A673 (cell line): ENCODE measurements at regions of chr17 and their contacts with region 1.

Region 1: GRCh38 chr17:63983320-63983719 is 10.6 kb upstream of the SCN4A start:
- DNase-seq: no peak
- H3K4me3 ChIP-seq: no peak overlapping the region
- H3K27ac ChIP-seq: no peak overlapping the region
- H3K4me1 ChIP-seq: no peaks in the 10 kb centered on the region
- H3K27me3 ChIP-seq: no peaks in the 10 kb centered on the region
- CTCF ChIP-seq: no peak

Region 2: DNA sequence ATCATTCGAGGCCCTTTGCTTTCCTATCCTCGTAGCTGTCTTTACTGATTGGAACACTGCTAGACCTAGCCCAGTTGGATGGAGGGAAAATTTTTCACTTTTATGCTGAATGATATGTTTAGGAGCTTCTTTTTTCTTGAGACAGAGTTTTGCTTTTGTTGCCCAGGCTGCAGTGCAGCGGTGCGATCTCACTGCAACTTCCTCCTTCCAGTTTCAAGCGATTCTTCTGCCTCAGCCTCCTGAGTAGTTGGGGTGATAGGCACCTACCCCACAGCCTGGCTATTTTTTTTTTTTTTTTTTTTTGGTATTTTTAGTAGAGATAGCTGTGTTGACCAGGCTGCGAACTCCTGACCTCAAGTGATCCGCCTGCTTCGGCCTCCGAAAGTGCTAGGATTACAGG is 173.3 kb before region 1 on chr17:
- CTCF ChIA-PET with region 1: no interaction called
- POLR2A ChIA-PET with region 1: no interaction called
- intact Hi-C with region 1: no loop called
- DNase-seq: no peak
- H3K4me3 ChIP-seq: no peak overlapping the region
- H3K27ac ChIP-seq: no peak overlapping the region
- H3K4me1 ChIP-seq: no peaks in the 10 kb centered on the region
- H3K27me3 ChIP-seq: no peaks in the 10 kb centered on the region
- CTCF ChIP-seq: no peak

Region 3: DNA sequence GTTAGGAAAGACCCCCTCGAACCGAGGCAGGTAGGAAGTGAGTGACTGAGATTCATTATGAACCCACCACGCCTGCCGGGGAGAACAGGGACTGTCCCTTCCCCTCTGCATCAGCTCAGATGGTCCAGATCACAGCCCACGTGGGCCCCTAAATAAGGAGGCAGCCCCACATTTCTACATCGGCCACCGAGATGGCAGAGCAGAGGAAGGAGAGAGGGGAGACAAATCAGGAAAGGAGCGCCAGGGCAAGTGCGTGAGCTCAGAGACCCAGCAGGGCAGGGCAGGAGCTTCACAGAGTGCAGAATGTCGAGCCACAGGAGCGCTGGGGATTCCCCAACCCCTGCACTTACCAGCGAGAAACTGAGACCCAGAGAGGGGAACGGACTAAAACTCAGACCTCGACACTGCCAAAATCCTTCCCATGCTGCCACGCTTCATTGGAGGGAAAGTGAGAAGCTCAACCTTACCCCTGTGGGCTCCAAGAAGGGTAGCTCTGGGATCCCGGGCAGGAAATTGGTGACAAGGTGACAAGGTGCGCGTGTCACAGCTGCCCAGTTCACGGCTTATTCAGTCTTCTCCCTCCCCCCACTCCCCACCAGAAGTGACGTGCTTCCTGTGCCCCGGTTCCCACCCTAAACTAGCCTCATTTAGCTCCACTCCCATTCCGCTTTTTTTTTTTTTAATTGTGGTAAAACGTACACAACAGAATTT is 36.9 kb after region 1 on chr17 and contains the start of gene ICAM2:
- CTCF ChIA-PET with region 1: no interaction called
- POLR2A ChIA-PET with region 1: interaction called, 18 read pairs
- intact Hi-C with region 1: no loop called
- DNase-seq: no peak
- H3K4me3 ChIP-seq: no peak within 1 kb of the TSS
- H3K27ac ChIP-seq: no peak within 1 kb of the TSS
- H3K4me1 ChIP-seq: no peaks in the 10 kb centered on the region
- H3K27me3 ChIP-seq: no peaks in the 10 kb centered on the region
- CTCF ChIP-seq: no peak
- total RNA-seq, gene ICAM2: 0.99 and 1.2 TPM in 2 replicates

Region 4: DNA sequence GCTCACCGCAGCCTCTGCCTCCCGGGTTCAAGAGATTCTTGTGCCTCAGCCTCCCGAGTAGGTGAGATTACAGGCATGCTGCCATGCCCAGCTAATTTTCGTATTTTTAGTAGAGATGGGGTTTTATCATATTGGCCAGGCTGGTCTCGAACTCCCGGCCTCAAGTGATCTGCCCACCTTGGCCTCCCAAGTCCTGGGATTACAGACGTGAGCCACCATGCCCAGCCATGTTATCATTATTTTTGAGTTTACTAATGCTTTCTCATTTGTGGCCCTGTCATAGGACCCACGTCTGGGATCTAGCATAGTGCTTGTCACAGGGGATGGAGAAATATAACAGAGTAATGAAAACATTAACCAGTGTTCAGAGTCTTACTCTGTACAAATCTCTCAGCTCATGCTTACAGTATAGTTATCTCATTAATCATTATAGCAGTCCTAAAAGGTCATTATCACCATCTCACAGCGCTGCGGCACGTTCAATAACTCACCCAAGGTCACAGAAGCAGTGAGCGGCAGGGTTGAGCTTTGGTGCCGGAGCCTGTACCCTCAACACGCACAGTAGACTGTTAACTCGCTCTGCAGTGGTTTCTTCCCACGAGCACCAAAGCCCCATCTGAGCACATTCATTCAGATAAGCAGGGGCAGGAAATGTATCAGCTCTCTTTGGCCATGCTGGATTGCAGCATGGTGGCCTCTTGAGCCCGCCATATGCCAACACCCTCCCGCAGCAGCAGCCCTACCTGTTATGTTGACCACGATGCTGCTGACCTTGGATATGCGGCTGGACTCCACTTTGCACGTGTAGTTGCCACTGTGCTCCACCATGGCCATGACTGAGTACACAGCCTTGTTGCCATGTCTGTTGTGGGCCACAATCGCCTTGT is 385.9 kb after region 1 on chr17:
- CTCF ChIA-PET with region 1: no interaction called
- POLR2A ChIA-PET with region 1: no interaction called
- intact Hi-C with region 1: no loop called
- DNase-seq: no peak
- H3K4me3 ChIP-seq: no peak overlapping the region
- H3K27ac ChIP-seq: no peak overlapping the region
- H3K4me1 ChIP-seq: no peaks in the 10 kb centered on the region
- H3K27me3 ChIP-seq: no peaks in the 10 kb centered on the region
- CTCF ChIP-seq: no peak

Region 5: DNA sequence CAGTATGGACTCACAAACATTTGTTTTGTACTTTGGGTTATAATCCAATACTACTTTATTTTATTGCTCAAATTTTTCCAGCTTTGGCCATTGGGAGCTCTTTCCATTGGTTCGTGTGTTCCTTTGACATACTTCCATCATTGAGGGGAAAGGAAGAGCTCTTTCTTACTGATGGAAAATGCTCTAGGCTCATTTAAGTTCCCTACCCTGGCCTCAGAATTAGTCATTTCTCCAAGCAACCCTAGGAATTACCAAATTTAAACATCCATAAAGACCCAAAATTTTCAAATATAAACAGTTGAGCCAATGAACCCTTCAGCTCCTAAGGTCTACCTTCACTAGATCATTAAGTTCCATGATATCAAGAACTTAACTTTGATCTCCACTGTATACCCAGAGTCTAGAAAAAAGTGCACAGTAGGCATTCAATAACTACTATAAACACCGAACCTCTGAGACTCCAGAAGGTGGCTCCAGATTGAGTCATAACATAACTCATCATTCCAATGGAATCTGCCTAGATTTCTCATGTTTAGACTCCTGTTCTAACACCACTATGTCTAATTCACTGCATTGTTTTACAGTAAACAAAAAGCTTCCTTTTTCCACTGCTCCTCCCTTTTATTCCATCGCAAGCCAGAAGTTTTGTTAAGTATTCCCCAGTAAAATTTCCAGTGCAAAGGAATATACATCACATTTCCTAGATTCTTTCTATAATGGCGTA is 639.8 kb after region 1 on chr17:
- CTCF ChIA-PET with region 1: no interaction called
- POLR2A ChIA-PET with region 1: no interaction called
- intact Hi-C with region 1: no loop called
- DNase-seq: no peak
- H3K4me3 ChIP-seq: no peak overlapping the region
- H3K27ac ChIP-seq: no peak overlapping the region
- H3K4me1 ChIP-seq: no peaks in the 10 kb centered on the region
- H3K27me3 ChIP-seq: no peaks in the 10 kb centered on the region
- CTCF ChIP-seq: no peak